GM12878 (cell line): ENCODE measurements at regions of chr11 and their contacts with region 1.

Region 1: DNA sequence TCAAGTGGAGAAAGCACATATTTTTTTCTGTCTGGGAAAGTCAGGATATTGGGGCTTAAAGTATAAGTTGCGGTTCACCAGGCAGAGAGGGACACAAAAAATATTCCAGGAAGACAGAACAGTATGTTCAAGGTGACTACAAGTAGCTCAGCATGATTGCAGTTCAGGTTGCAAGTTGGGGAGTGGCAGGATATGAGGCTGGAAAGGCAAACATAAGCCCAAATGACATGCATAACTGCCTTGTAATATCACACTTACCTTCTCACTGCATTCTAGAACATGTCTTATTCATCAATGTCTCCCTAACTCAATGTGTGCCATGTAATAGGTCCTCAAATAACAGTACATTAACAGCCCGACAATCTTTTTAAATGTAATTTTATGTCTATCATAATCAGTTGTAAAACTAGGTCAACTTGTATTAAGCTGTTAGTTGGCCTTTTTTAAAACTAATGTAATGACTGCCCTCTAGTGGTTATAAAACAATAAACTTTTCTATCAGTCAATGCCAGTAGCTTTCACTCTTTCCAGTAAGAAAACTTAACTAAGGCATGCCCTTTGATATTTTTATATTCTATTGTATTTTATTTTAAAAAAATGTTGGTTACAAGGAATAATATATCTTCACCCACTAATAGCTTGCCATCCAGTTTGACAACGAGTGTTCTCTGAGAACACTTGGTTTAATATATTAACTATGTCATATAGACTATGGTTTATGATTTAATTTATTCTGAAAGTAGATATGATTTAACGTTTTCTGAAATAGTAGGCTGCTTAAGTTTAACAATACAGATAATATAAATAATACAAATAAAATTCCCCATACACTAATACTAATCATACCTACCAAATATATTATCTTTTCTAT is 39.4 kb upstream of the CFAP300 start:
- DNase-seq: peak; percentile 1
- ATAC-seq: peak; percentile 82
- H3K4me3 ChIP-seq: no peak overlapping the region
- H3K27ac ChIP-seq: no peak overlapping the region
- H3K4me1 ChIP-seq: no peaks in the 10 kb centered on the region
- H3K27me3 ChIP-seq: peaks cover 0 to 4% of the 10 kb centered on the region in 2 experiments; a peak in 2 of 4 replicates
- CTCF ChIP-seq: peak; percentile 26 to 58 (median 28); a peak in 3 of 6 replicates
- EP300 ChIP-seq: no peak
- POLR2A ChIP-seq: no peak
- RAD21 ChIP-seq: peak; percentile 49

Region 2: GRCh38 chr11:101436511-101437142 is 571.2 kb before region 1 on chr11:
- CTCF ChIA-PET with region 1: no interaction called
- POLR2A ChIA-PET with region 1: no interaction called
- RAD21 ChIA-PET with region 1: no interaction called
- SMC1A ChIA-PET with region 1: interaction called, 3 read pairs
- in situ Hi-C with region 1: no loop called
- intact Hi-C with region 1: loop called (anchors 5 kb)
- DNase-seq: no peak
- ATAC-seq: peak; percentile 65
- H3K4me3 ChIP-seq: no peak overlapping the region
- H3K27ac ChIP-seq: no peak overlapping the region
- H3K4me1 ChIP-seq: no peaks in the 10 kb centered on the region
- H3K27me3 ChIP-seq: no peaks in the 10 kb centered on the region
- CTCF ChIP-seq: peak; percentile 53 to 68 (median 66)
- EP300 ChIP-seq: no peak
- POLR2A ChIP-seq: no peak
- RAD21 ChIP-seq: peak; percentile 59

Region 3: GRCh38 chr11:101860696-101861427 is 146.9 kb before region 1 on chr11:
- CTCF ChIA-PET with region 1: interaction called, 110 read pairs
- POLR2A ChIA-PET with region 1: no interaction called
- RAD21 ChIA-PET with region 1: interaction called, 49 read pairs
- SMC1A ChIA-PET with region 1: interaction called, 45 read pairs
- in situ Hi-C with region 1: loop called (anchors 10 kb)
- intact Hi-C with region 1: loop called (anchors 1 kb)
- DNase-seq: no peak
- ATAC-seq: peak; percentile 91
- H3K4me3 ChIP-seq: no peak overlapping the region
- H3K27ac ChIP-seq: no peak overlapping the region
- H3K4me1 ChIP-seq: no peaks in the 10 kb centered on the region
- H3K27me3 ChIP-seq: no peaks in the 10 kb centered on the region; a peak in 1 of 4 replicates
- CTCF ChIP-seq: peak; percentile 61 to 72 (median 65)
- EP300 ChIP-seq: no peak
- POLR2A ChIP-seq: no peak
- RAD21 ChIP-seq: peak; percentile 57

Region 4: DNA sequence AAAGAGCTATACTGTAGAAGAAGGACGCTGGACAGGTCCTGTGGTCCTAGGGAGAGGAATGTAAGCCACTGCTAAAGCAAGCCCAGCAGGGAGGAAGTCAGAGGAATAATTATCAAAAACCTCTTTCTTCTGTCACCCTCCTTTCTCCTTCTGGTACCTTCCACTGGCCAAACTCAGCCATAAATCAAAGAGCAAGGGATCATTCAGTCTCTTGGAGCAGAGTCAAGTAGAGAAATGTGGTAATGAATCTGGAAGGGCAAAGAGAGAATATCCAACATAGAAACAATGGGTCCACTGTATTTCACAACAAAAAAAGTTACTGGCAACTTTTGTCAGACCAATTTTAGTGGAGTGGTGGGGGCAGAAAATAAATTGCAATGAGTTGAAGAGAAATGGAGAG is 58.0 kb before region 1 on chr11:
- CTCF ChIA-PET with region 1: interaction called, 8 read pairs
- POLR2A ChIA-PET with region 1: no interaction called
- RAD21 ChIA-PET with region 1: no interaction called
- SMC1A ChIA-PET with region 1: no interaction called
- in situ Hi-C with region 1: loop called (anchors 10 kb)
- intact Hi-C with region 1: no loop called
- DNase-seq: no peak
- ATAC-seq: no peak
- H3K4me3 ChIP-seq: no peak overlapping the region
- H3K27ac ChIP-seq: no peak overlapping the region
- H3K4me1 ChIP-seq: no peaks in the 10 kb centered on the region
- H3K27me3 ChIP-seq: no peaks in the 10 kb centered on the region
- CTCF ChIP-seq: no peak
- EP300 ChIP-seq: no peak
- POLR2A ChIP-seq: no peak
- RAD21 ChIP-seq: no peak

Region 5: DNA sequence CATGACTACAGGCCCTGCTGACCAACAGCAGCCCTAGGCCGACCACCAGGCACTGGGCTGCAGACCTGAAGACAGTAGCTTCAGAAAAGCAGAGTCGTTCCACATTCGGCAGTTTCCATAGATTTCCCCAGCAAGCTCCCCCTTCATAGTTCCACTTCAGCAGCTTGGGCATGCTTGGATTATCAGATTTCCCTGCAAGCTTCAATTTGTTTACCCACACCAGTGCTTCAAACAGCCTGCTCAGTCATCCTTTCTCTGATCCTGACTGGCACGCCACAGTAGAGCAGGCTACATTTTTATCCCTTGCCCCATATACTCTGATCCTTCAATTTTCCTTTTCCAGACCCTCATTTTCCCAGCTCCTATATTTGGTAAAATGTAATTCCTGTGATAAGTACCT is 11.7 kb before region 1 on chr11:
- CTCF ChIA-PET with region 1: interaction called, 23 read pairs
- POLR2A ChIA-PET with region 1: no interaction called
- RAD21 ChIA-PET with region 1: no interaction called
- SMC1A ChIA-PET with region 1: interaction called, 6 read pairs
- in situ Hi-C with region 1: no loop called
- intact Hi-C with region 1: no loop called
- DNase-seq: no peak
- ATAC-seq: no peak
- H3K4me3 ChIP-seq: no peak overlapping the region
- H3K27ac ChIP-seq: no peak overlapping the region
- H3K4me1 ChIP-seq: no peaks in the 10 kb centered on the region
- H3K27me3 ChIP-seq: no peaks in the 10 kb centered on the region
- CTCF ChIP-seq: no peak
- EP300 ChIP-seq: no peak
- POLR2A ChIP-seq: no peak
- RAD21 ChIP-seq: no peak

Region 6: DNA sequence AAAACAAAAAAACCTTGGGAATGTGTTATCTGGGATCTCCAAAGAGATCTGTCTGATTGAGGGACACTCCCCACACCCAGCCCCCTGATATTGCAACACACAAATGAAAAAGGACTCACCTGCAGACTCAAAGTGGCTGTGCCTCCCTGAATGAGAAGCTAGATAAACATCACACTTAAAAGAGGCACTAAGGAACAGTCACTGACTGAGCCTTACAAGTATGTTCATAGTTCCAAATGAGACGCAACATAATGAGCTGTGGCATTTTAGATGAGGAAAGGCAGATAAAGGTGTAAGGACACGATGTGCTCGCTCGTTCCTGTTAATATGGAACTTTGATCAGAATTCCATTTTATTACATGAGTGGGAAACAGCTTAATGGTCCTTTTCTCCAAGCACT is 18.4 kb after region 1 on chr11:
- CTCF ChIA-PET with region 1: interaction called, 22 read pairs
- POLR2A ChIA-PET with region 1: no interaction called
- RAD21 ChIA-PET with region 1: interaction called, 3 read pairs
- SMC1A ChIA-PET with region 1: no interaction called
- in situ Hi-C with region 1: no loop called
- intact Hi-C with region 1: no loop called
- DNase-seq: no peak
- ATAC-seq: no peak
- H3K4me3 ChIP-seq: no peak overlapping the region
- H3K27ac ChIP-seq: no peak overlapping the region
- H3K4me1 ChIP-seq: no peaks in the 10 kb centered on the region
- H3K27me3 ChIP-seq: no peaks in the 10 kb centered on the region
- CTCF ChIP-seq: no peak
- EP300 ChIP-seq: no peak
- POLR2A ChIP-seq: no peak
- RAD21 ChIP-seq: no peak

Region 7: GRCh38 chr11:102036757-102037156 is 29.0 kb after region 1 on chr11:
- CTCF ChIA-PET with region 1: no interaction called
- POLR2A ChIA-PET with region 1: no interaction called
- RAD21 ChIA-PET with region 1: no interaction called
- SMC1A ChIA-PET with region 1: no interaction called
- in situ Hi-C with region 1: no loop called
- intact Hi-C with region 1: no loop called
- DNase-seq: no peak
- ATAC-seq: no peak
- H3K4me3 ChIP-seq: no peak overlapping the region
- H3K27ac ChIP-seq: no peak overlapping the region
- H3K4me1 ChIP-seq: no peaks in the 10 kb centered on the region
- H3K27me3 ChIP-seq: no peaks in the 10 kb centered on the region
- CTCF ChIP-seq: no peak
- EP300 ChIP-seq: no peak
- POLR2A ChIP-seq: no peak
- RAD21 ChIP-seq: no peak